ENCODE measurements at regions of chr7 and their contacts with region 1.

Region 1: DNA sequence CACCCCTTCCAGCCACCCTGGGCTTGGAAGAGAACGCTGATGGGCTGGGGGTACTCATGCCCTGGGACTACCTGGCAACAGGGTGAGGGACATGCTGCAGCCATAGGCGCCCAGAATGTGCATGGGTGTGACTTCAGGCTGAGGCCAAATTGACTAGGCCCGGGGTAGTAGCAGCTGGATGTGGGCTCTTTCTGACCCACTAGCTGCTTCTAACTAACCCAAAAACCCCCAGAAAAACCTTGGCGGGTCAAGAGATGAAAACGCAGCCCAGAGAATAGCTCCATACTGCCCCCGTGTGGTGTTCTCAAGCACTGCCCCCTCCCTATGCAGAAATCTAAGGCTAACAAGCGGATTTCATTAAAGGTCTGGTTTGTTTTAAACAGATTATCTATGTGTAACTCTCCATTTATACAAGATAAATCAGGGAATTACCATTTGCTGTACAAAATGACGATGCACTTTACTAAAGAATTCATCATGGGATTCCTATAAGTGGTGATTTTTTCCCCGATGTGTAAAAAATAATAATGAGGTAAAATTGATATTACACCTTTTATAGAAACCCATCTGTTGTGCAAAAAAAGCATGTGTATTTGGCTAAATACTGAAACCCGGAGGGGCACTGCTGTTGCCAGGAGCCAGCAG is 4.2 kb downstream of the SMARCD3 start:
- DNase-seq: peak; percentile 81
- ATAC-seq: peak; percentile 23
- H3K4me3 Mint-ChIP-seq: peak overlapping the region; percentile 65
- H3K27ac Mint-ChIP-seq: peak overlapping the region; percentile 86
- H3K4me1 Mint-ChIP-seq: peaks cover 39% of the 10 kb centered on the region
- H3K27me3 Mint-ChIP-seq: peaks cover 32% of the 10 kb centered on the region

Region 2: GRCh38 chr7:151123822-151124464 is 120.4 kb before region 1 on chr7:
- CTCF ChIA-PET with region 1: interaction called, 23 read pairs
- POLR2A ChIA-PET with region 1: no interaction called
- DNase-seq: peak; percentile 88
- ATAC-seq: peak; percentile 93
- H3K4me3 Mint-ChIP-seq: no peak overlapping the region
- H3K27ac Mint-ChIP-seq: no peak overlapping the region
- H3K4me1 Mint-ChIP-seq: no peaks in the 10 kb centered on the region
- H3K27me3 Mint-ChIP-seq: no peaks in the 10 kb centered on the region

Region 3: DNA sequence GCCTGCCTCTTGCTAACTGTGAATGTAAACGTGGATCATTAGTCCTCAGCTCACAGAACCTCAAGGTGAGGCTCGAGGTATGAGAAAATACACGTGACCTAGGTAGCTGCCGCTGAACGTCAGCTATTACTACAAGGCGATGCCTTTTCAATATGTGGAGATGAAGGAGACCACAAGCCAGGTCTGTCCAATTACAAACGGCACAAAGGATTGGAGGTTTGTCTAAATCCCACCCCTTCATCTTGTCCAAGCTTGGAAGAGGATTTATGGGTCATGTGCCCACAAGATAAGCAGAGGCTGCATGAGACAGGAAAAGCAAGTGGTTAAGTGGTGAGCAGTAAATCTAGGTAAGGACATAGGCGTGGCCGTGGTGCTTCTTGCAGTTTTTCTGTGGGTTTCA is 37.4 kb before region 1 on chr7:
- CTCF ChIA-PET with region 1: interaction called, 16 read pairs
- POLR2A ChIA-PET with region 1: no interaction called
- DNase-seq: peak; percentile 57
- ATAC-seq: peak; percentile 78
- H3K4me3 Mint-ChIP-seq: peak overlapping the region; percentile 36
- H3K27ac Mint-ChIP-seq: peak overlapping the region; percentile 83
- H3K4me1 Mint-ChIP-seq: peaks cover 28% of the 10 kb centered on the region
- H3K27me3 Mint-ChIP-seq: peaks cover 22% of the 10 kb centered on the region

Region 4: DNA sequence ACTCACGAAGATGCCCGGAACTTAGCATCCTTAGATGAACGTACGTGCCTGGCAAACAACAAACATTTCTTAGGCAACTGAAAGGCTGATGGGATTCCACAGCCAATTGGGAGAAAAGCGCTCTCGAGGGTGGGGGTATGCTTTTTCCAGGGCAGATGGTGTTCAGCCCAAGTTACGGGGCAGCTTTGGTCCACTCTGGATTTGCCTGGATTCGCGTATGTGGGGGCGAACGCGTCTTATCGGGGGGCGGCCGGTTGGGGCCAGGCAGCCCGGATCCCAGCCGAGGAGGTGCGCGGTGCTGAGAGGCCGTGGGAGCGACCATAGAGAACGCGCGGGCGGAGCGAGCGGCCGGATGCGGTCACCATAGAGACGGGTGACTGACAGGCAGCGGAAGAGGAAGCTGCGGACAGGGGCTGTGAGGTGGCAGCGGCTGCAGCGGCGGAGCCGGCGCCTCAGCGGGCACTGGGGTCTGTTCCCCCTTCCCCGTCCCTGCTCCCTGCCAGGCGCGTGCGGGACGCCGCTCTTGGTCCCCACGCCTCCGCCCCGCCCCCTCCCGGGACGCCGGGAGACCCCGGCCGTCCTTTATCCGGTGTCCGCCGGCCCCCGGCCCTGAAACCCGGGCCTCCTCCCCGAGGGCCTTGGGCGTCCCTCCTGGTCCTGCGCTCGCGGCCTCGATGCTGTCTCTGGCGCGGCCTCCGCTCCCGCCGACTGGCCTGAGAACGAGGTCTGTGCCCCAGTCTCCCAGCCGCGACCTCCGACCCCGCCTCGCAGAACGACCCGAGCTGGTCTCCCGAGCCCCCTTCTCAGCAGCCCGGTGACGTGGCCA is 12.0 kb before region 1 on chr7 and contains the start of gene CHPF2:
- CTCF ChIA-PET with region 1: interaction called, 59 read pairs
- POLR2A ChIA-PET with region 1: interaction called, 21 read pairs
- DNase-seq: peak; percentile 95
- ATAC-seq: peak; percentile 90
- H3K4me3 Mint-ChIP-seq: peak within 1 kb of the TSS; percentile 100
- H3K27ac Mint-ChIP-seq: peak within 1 kb of the TSS; percentile 99
- H3K4me1 Mint-ChIP-seq: peaks cover 41% of the 10 kb centered on the region
- H3K27me3 Mint-ChIP-seq: no peaks in the 10 kb centered on the region
- total RNA-seq, gene CHPF2: 34.7 to 36.1 TPM

Region 5: GRCh38 chr7:151286148-151286547 is 41.8 kb after region 1 on chr7:
- CTCF ChIA-PET with region 1: no interaction called
- POLR2A ChIA-PET with region 1: no interaction called
- DNase-seq: no peak
- ATAC-seq: no peak
- H3K4me3 Mint-ChIP-seq: no peak overlapping the region
- H3K27ac Mint-ChIP-seq: no peak overlapping the region
- H3K4me1 Mint-ChIP-seq: no peaks in the 10 kb centered on the region
- H3K27me3 Mint-ChIP-seq: peaks cover 32% of the 10 kb centered on the region

Region 6: GRCh38 chr7:151315038-151315655 is 70.8 kb after region 1 on chr7:
- CTCF ChIA-PET with region 1: interaction called, 10 read pairs
- POLR2A ChIA-PET with region 1: no interaction called
- DNase-seq: peak; percentile 91
- ATAC-seq: peak; percentile 94
- H3K4me3 Mint-ChIP-seq: peak overlapping the region; percentile 40
- H3K27ac Mint-ChIP-seq: peak overlapping the region; percentile 79
- H3K4me1 Mint-ChIP-seq: peaks cover 16% of the 10 kb centered on the region
- H3K27me3 Mint-ChIP-seq: no peaks in the 10 kb centered on the region

Measured in activated CD8-positive, alpha-beta T cell treated with anti-CD3 and anti-CD28 coated beads, Interleukin-2, amount 10 ng/mL, durations not matched to agents 7 days and 5 days (primary cell).